Spleen (tissue), 13 donors: ENCODE measurements at regions of chr11 and their contacts with region 1.

Region 1: GRCh38 chr11:8566613-8567210 is 27.3 kb downstream of the STK33 start:
- DNase-seq: no peak
- H3K4me3 ChIP-seq: no peak overlapping the region
- H3K27ac ChIP-seq: no peak overlapping the region
- H3K4me1 ChIP-seq: peaks cover 0 to 8% (median 0%) of the 10 kb centered on the region in 6 donors
- H3K27me3 ChIP-seq: no peaks in the 10 kb centered on the region
- CTCF ChIP-seq: peak; percentile 45 to 77 (median 65)
- POLR2A ChIP-seq: no peak

Region 2: DNA sequence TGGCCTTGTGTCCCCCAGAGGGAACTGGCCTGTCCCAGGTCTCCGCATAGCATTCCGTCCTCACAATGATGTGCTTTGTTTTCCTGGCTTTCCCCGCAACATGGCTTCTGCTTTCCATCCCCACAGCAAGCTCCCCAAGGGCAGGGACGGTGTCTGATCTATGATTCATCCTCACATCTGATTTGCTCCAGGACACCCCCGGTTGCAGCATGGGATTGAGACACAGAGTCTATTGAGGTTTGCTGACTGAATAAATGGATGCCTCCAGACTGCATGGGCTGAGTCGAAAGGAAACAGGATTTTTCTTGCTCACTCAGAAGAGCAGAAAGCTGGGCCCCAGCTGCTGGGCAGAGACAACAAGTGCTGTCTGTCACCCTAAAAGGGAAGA is 343.2 kb before region 1 on chr11:
- intact Hi-C with region 1: loop called (anchors 2 kb)
- DNase-seq: peak; percentile 58
- H3K4me3 ChIP-seq: no peak overlapping the region
- H3K27ac ChIP-seq: no peak overlapping the region
- H3K4me1 ChIP-seq: peaks cover 0 to 7% (median 2%) of the 10 kb centered on the region in 6 donors
- H3K27me3 ChIP-seq: no peaks in the 10 kb centered on the region
- CTCF ChIP-seq: no peak
- POLR2A ChIP-seq: no peak

Region 3: GRCh38 chr11:8768625-8769333 is 202.1 kb after region 1 on chr11:
- intact Hi-C with region 1: no loop called
- DNase-seq: no peak
- H3K4me3 ChIP-seq: no peak overlapping the region
- H3K27ac ChIP-seq: peak overlapping the region in 6 of 8 donors; percentile 32 to 82 (median 72)
- H3K4me1 ChIP-seq: peaks cover 9 to 77% (median 35%) of the 10 kb centered on the region in 6 donors
- H3K27me3 ChIP-seq: no peaks in the 10 kb centered on the region
- CTCF ChIP-seq: no peak
- POLR2A ChIP-seq: no peak